Activated CD8-positive, alpha-beta memory T cell treated with anti-CD3 and anti-CD28 coated beads, Interleukin-2, amount 10 ng/mL, durations not matched to agents 7 days and 5 days (primary cell): ENCODE measurements at regions of chrX and their contacts with region 1.

Region 1: DNA sequence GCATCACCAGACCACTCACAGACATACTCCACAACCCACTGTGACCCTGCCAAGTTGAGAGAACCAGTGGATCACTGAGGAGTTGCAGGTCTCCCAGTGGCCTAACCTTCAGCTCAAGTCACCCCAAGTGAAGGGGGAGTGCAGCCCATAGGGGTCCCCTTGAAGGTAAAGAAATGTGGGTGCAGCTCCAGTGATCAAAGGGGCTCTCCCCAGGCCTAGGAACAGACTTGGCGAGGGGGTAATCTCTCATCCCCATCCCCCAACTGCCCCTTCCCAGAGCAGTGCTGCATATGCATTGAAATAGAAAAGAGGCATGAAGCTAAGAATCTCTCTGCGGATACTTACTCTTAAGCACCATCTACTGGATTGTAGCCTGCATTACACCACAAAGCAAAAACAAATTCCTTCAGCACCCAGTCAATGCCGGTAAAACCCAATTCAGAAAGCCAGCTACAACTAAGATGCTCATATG is 27.0 kb downstream of the MAGEE1 start:
- DNase-seq: no peak
- ATAC-seq: no peak
- H3K4me3 Mint-ChIP-seq: no peak overlapping the region
- H3K27ac Mint-ChIP-seq: no peak overlapping the region
- H3K4me1 Mint-ChIP-seq: no peaks in the 10 kb centered on the region
- H3K27me3 Mint-ChIP-seq: no peaks in the 10 kb centered on the region

Region 2: DNA sequence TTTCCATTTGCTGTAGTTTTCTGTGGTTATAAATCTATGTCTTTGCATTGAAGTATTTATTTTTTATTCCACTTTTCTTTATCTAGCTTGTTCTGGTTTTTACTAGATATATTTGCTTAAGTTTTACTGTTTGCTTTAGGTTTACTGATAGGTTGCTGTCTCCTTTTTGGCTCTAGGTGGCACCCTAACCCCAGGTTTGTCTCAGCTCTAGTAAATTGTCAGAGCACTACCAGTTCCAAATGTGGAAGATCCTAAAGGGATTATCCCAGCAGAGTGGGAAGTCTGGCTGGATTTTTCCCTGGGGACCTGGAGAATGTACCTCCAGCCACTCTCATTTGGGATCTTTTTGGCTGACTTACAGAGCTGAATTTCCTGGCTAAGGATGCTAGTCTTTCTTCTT is 175.5 kb before region 1 on chrX:
- CTCF ChIA-PET with region 1: interaction called, 20 read pairs
- DNase-seq: peak; percentile 44
- ATAC-seq: no peak
- H3K4me3 Mint-ChIP-seq: no peak overlapping the region
- H3K27ac Mint-ChIP-seq: no peak overlapping the region
- H3K4me1 Mint-ChIP-seq: no peaks in the 10 kb centered on the region
- H3K27me3 Mint-ChIP-seq: no peaks in the 10 kb centered on the region

Region 3: DNA sequence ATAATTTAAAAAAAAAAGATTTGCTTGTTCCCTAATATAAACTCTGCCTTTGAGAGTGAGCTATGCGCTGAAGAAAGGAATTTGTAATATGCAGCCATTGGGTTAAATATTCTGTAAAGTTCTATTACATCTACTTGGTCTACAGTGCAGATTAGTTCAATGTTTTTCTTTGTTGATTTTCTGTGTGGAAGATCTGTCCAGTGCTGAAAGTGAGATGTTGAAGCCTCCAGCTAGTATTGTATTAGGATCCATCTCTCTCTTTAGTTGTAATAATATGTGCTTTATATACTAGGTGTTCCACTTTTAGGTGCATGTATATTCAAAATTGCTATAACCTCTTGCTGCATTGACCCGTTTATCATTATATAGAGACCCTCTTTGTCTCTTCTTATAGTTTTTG is 22.9 kb after region 1 on chrX:
- CTCF ChIA-PET with region 1: no interaction called
- DNase-seq: no peak
- ATAC-seq: no peak
- H3K4me3 Mint-ChIP-seq: no peak overlapping the region
- H3K27ac Mint-ChIP-seq: no peak overlapping the region
- H3K4me1 Mint-ChIP-seq: no peaks in the 10 kb centered on the region
- H3K27me3 Mint-ChIP-seq: no peaks in the 10 kb centered on the region

Region 4: DNA sequence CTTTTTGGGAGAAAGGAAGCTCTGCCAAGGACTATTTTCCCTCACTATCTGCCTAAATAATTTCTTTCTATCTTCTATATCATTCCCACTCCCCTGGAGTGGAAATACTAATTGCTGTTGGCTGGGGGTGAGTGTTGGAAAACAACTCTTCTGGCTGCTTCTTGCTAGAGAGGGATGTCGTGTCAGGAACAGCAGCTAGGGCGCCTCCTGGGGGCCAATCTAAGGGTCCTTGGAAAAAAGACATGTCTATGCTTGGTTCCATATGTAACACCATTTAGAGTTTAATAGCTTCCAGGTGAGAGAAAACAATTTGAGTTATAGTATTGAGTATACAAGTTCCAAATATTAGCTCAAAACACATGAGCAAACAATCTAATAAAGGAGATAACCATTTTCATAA is 84.4 kb after region 1 on chrX:
- CTCF ChIA-PET with region 1: no interaction called
- DNase-seq: no peak
- ATAC-seq: no peak
- H3K4me3 Mint-ChIP-seq: no peak overlapping the region
- H3K27ac Mint-ChIP-seq: no peak overlapping the region
- H3K4me1 Mint-ChIP-seq: no peaks in the 10 kb centered on the region
- H3K27me3 Mint-ChIP-seq: no peaks in the 10 kb centered on the region